ENCODE measurements at regions of chr1 and their contacts with region 1.

Region 1: DNA sequence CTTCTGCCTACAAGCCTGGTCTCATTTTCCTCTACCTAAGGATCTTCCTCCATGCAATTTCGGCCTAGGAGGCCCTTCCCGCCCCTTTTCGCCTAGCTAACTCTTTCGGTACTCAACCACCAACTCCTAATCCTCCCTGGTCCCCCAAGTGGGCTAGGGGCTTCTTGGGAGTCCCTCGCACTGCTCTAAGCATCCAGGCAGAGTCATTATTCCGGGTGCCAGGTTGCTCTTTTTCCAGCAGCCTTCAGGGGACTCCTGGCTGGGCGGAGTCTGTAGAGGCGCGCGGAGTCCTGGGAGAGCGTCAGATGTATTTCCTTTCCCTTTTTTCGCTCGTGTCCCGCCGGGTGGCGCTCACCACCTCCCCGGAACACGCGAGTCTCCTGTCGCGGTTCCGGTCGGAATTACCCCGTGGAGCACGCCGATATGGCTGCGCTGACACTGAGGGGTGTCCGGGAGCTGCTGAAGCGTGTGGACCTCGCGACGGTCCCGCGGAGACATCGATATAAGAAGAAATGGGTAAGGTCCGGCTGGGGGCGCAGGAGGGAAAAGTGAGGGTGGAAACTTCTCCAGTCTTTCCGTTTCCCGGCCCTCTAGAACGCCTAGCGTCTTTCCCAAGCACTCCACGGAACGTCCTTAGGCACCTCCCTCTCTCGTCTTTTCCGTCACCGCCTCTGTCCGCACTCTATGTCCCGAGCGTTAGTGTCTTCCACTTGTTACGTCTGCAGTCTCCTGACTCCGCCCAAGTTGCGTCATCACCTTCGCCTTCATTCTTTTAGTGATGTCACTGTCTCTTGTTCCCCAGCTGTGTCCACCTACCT is at the start of gene NSUN4:
- DNase-seq: peak; percentile 74 to 88 (median 85)
- ATAC-seq: peak; percentile 93
- H3K4me3 ChIP-seq: peak within 1 kb of the TSS; percentile 93
- H3K4me3 Mint-ChIP-seq: peak within 1 kb of the TSS; percentile 84 to 100 (median 100)
- H3K27ac ChIP-seq: peak within 1 kb of the TSS; percentile 97
- H3K27ac Mint-ChIP-seq: peak within 1 kb of the TSS; percentile 95 to 100 (median 100)
- H3K4me1 ChIP-seq: peaks cover 5% of the 10 kb centered on the region in 2 donors
- H3K4me1 Mint-ChIP-seq: peaks cover 27 to 54% (median 42%) of the 10 kb centered on the region in 7 donors
- H3K27me3 ChIP-seq: no peaks in the 10 kb centered on the region
- H3K27me3 Mint-ChIP-seq: no peaks in the 10 kb centered on the region
- total RNA-seq, gene NSUN4: 27.1 to 30.7 (median 29.0) TPM

Region 2: DNA sequence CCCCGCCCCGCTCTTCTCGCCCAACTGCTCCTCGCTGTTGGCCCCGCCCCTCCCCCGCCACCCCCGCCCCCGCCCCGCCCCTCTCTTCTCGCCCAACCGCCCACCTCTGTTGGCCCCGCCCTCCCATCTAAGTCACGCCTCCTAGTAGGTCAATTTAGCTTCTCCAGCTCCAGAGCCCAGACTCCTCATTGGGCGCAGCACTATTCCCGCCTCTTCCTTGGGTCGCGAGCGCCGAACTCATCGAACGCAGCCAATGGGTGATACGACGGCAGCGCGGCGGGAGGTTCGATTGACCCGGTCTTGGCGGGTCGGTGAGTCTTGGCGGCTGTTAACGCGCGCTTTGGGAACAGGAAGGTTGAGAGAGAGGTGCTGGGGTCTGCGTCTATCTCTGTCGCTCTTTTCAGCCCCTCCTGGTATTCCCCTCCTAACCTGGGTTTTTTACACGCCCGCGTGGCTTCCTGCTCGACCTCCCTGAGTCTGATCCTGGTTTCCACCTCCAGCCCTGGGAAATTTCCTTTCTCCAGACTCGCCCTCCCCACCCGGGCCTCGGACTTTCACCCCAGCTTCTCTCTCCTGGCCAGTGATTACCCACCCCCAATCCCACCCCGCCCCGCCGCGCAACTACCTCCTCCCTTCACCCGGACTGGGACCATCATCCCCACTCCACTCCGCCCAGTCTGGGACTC is 93.0 kb before region 1 on chr1 and contains the start of gene RAD54L:
- CTCF ChIA-PET with region 1: interaction called, 3 read pairs
- POLR2A ChIA-PET with region 1: interaction called, 8 read pairs
- intact Hi-C with region 1: loop called (anchors 1 kb)
- DNase-seq: peak; percentile 83 to 97 (median 95)
- ATAC-seq: peak; percentile 99
- H3K4me3 ChIP-seq: peak within 1 kb of the TSS; percentile 89
- H3K4me3 Mint-ChIP-seq: peak within 1 kb of the TSS; percentile 86 to 100 (median 94)
- H3K27ac ChIP-seq: peak within 1 kb of the TSS; percentile 66
- H3K27ac Mint-ChIP-seq: peak within 1 kb of the TSS; percentile 62 to 96 (median 78)
- H3K4me1 ChIP-seq: peaks cover 4 to 8% of the 10 kb centered on the region in 2 donors
- H3K4me1 Mint-ChIP-seq: peaks cover 0 to 41% (median 17%) of the 10 kb centered on the region in 7 donors
- H3K27me3 ChIP-seq: no peaks in the 10 kb centered on the region
- H3K27me3 Mint-ChIP-seq: no peaks in the 10 kb centered on the region
- total RNA-seq, gene RAD54L: 0.94 to 31.9 (median 2.1) TPM

Region 3: GRCh38 chr1:46285730-46286477 is 54.7 kb before region 1 on chr1:
- CTCF ChIA-PET with region 1: no interaction called
- POLR2A ChIA-PET with region 1: no interaction called
- intact Hi-C with region 1: loop called in 1 of 2 experiments (anchors 10 kb)
- DNase-seq: peak in 5 of 9 donors; percentile 3 to 38 (median 19)
- ATAC-seq: peak; percentile 26
- H3K4me3 ChIP-seq: no peak overlapping the region
- H3K4me3 Mint-ChIP-seq: no peak overlapping the region
- H3K27ac ChIP-seq: no peak overlapping the region
- H3K27ac Mint-ChIP-seq: peak overlapping the region in 5 of 9 donors; percentile 23 to 58 (median 56)
- H3K4me1 ChIP-seq: no peaks in the 10 kb centered on the region
- H3K4me1 Mint-ChIP-seq: peaks cover 4 to 36% (median 16%) of the 10 kb centered on the region in 7 donors
- H3K27me3 ChIP-seq: no peaks in the 10 kb centered on the region
- H3K27me3 Mint-ChIP-seq: no peaks in the 10 kb centered on the region

Region 4: GRCh38 chr1:46303038-46303871 is 37.4 kb before region 1 on chr1 and contains the starts of genes LRRC41 and UQCRH:
- CTCF ChIA-PET with region 1: no interaction called
- POLR2A ChIA-PET with region 1: interaction called, 12 read pairs
- intact Hi-C with region 1: loop called (anchors 1 kb)
- DNase-seq: peak; percentile 91 to 96 (median 94)
- ATAC-seq: peak; percentile 94
- H3K4me3 ChIP-seq: peak within 1 kb of the TSS; percentile 83
- H3K4me3 Mint-ChIP-seq: peak within 1 kb of the TSS; percentile 94 to 99 (median 98)
- H3K27ac ChIP-seq: peak within 1 kb of the TSS; percentile 98
- H3K27ac Mint-ChIP-seq: peak within 1 kb of the TSS; percentile 95 to 99 (median 97)
- H3K4me1 ChIP-seq: peaks cover 19 to 37% of the 10 kb centered on the region in 2 donors
- H3K4me1 Mint-ChIP-seq: peaks cover 31 to 65% (median 46%) of the 10 kb centered on the region in 7 donors
- H3K27me3 ChIP-seq: no peaks in the 10 kb centered on the region
- H3K27me3 Mint-ChIP-seq: peaks cover 0 to 2% (median 0%) of the 10 kb centered on the region in 5 donors
- total RNA-seq, gene LRRC41: 34.4 to 50.5 (median 37.2) TPM
- total RNA-seq, gene UQCRH: 107 to 260 (median 127) TPM

Region 5: DNA sequence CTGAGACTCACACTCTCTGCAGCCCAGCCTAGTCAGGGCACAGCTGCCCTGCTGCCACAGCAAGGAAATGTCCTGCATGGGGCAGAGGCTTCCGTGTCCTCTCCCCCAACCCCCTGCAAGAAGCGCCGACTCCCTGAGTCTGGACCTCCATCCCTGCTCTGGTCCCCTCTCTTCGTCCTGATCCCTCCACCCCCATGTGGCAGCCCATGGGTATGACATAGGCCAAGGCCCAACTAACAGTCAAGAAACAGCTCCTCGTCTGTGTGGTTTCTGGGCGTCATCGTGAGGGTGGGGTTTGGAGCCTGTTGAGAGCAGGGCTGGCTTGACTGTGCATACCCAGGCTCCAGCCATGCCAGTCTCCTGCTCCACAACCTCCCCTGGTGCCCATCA is 73.0 kb after region 1 on chr1:
- CTCF ChIA-PET with region 1: no interaction called
- POLR2A ChIA-PET with region 1: no interaction called
- intact Hi-C with region 1: no loop called
- DNase-seq: no peak
- ATAC-seq: peak; percentile 80
- H3K4me3 ChIP-seq: no peak overlapping the region
- H3K4me3 Mint-ChIP-seq: no peak overlapping the region
- H3K27ac ChIP-seq: no peak overlapping the region
- H3K27ac Mint-ChIP-seq: no peak overlapping the region
- H3K4me1 ChIP-seq: no peaks in the 10 kb centered on the region
- H3K4me1 Mint-ChIP-seq: no peaks in the 10 kb centered on the region
- H3K27me3 ChIP-seq: no peaks in the 10 kb centered on the region
- H3K27me3 Mint-ChIP-seq: no peaks in the 10 kb centered on the region

Measured in naive thymus-derived CD4-positive, alpha-beta T cell (primary cell).